ENCODE measurements at regions of chr16 and their contacts with region 1.

Region 1: DNA sequence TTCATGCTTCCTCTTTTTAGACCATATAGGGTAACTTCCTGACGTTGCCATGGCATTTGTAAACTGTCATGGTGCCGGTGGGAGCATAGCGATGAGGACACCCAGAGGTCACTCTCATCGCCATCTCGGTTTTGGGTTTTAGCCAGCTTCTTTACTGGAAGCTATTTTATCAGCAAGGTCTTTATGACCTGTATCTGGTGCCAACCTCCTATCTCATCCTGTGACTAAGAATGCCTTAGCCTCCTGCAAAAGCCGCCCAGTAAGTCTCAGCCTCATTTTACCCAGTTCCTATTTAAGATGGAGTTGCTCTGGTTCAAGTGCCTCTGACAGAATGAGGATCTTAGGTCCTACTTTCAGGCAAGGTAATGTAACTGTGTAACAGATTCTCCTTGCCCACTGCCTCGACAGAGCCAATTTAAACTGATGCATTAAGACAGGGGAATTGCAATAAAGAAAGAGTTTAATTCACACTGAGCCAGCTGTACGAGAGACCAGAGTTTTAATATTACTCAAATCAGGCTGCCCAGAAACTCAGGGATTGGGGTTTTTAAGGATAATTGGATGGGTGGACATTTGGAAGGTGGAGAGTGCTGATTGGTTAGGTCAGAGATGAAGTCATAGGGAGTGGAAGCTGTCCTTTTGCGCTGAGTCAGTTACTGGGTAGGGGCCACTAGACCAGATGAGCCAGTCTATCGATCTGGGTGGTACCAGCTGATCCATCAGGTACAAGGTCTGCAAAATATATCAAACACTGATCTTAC is 59.9 kb upstream of the ATF7IP2 start:
- DNase-seq: no peak
- ATAC-seq: no peak
- H3K4me3 ChIP-seq: no peak overlapping the region
- H3K4me3 Mint-ChIP-seq: no peak overlapping the region
- H3K27ac ChIP-seq: no peak overlapping the region
- H3K27ac Mint-ChIP-seq: no peak overlapping the region
- H3K4me1 ChIP-seq: peaks cover 27% of the 10 kb centered on the region
- H3K4me1 Mint-ChIP-seq: peaks cover 13 to 21% of the 10 kb centered on the region in 2 donors
- H3K27me3 ChIP-seq: no peaks in the 10 kb centered on the region
- H3K27me3 Mint-ChIP-seq: no peaks in the 10 kb centered on the region
- CTCF ChIP-seq: no peak

Region 2: GRCh38 chr16:10031473-10031872 is 294.5 kb before region 1 on chr16:
- intact Hi-C with region 1: no loop called
- DNase-seq: no peak
- ATAC-seq: no peak
- H3K4me3 ChIP-seq: no peak overlapping the region
- H3K4me3 Mint-ChIP-seq: no peak overlapping the region
- H3K27ac ChIP-seq: no peak overlapping the region
- H3K27ac Mint-ChIP-seq: no peak overlapping the region
- H3K4me1 ChIP-seq: no peaks in the 10 kb centered on the region
- H3K4me1 Mint-ChIP-seq: no peaks in the 10 kb centered on the region
- H3K27me3 ChIP-seq: no peaks in the 10 kb centered on the region
- H3K27me3 Mint-ChIP-seq: no peaks in the 10 kb centered on the region
- CTCF ChIP-seq: no peak

Region 3: GRCh38 chr16:10385725-10386516 is 60.0 kb after region 1 on chr16 and contains the start of gene ATF7IP2:
- intact Hi-C with region 1: loop called (anchors 5 kb)
- DNase-seq: peak; percentile 79 to 91
- ATAC-seq: peak; percentile 94 to 97 (median 95)
- H3K4me3 ChIP-seq: peak within 1 kb of the TSS; percentile 77
- H3K4me3 Mint-ChIP-seq: peak within 1 kb of the TSS; percentile 98
- H3K27ac ChIP-seq: peak within 1 kb of the TSS; percentile 68
- H3K27ac Mint-ChIP-seq: peak within 1 kb of the TSS; percentile 86 to 98
- H3K4me1 ChIP-seq: peaks cover 5% of the 10 kb centered on the region
- H3K4me1 Mint-ChIP-seq: peaks cover 49 to 50% of the 10 kb centered on the region in 2 donors
- H3K27me3 ChIP-seq: no peaks in the 10 kb centered on the region
- H3K27me3 Mint-ChIP-seq: no peaks in the 10 kb centered on the region
- CTCF ChIP-seq: no peak
- total RNA-seq, gene ATF7IP2: 41.7 to 53.5 (median 43.8) TPM

Region 4: DNA sequence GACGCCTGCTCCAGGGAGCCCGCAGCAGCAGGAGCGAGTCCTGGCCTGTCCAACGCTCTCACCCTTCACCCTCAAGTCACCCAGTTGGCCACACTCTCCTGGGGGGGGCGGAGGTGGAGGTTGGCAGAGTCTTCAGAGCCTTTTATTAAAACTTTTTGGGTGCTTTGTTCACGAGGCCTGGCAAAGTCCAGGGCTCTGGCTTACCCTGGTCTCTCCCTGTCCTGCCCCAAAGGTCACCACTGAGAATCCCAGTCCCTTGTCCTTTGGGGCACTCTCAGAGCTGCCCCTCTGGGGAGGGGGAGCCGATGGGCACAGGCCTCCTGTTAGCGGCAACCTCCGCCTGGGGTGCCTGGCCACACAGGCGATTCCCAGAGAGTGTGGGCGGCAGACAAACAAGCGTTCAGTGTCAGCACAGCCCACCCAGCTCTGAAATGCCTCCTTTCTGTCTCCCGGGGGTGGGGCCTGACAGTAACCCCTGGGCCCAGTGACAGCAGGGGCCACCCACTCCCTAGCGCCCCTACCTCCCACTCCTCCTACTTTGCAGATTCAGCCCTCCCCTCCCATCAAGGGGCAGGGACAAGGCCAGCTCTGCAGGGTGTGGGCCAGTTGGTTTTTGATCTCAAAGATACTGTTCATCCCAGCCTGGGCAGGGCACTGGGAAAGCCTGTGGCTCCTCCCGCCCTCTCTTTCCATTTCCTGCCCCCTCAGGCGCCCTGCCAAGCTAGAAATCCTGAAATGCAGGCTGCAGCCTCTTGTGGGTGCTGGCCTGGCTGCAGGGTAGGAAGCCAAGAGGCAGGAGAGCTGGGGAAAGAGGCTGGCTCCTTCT is 291.0 kb after region 1 on chr16:
- intact Hi-C with region 1: no loop called
- DNase-seq: no peak
- ATAC-seq: no peak
- H3K4me3 ChIP-seq: no peak overlapping the region
- H3K4me3 Mint-ChIP-seq: no peak overlapping the region
- H3K27ac ChIP-seq: no peak overlapping the region
- H3K27ac Mint-ChIP-seq: no peak overlapping the region
- H3K4me1 ChIP-seq: no peaks in the 10 kb centered on the region
- H3K4me1 Mint-ChIP-seq: peaks cover 0 to 8% of the 10 kb centered on the region in 2 donors
- H3K27me3 ChIP-seq: no peaks in the 10 kb centered on the region
- H3K27me3 Mint-ChIP-seq: peaks cover 19 to 26% of the 10 kb centered on the region in 2 donors
- CTCF ChIP-seq: no peak